HEK293 (cell line): ENCODE measurements at regions of chr15 and their contacts with region 1.

Region 1: GRCh38 chr15:75023181-75023871 is at the start of gene PPCDC:
- H3K4me3 ChIP-seq: peak within 1 kb of the TSS; percentile 66
- H3K27ac ChIP-seq: peak within 1 kb of the TSS; percentile 93
- H3K4me1 ChIP-seq: 0 out of 2 replicates have a peak, but pooled peaks cover 2% of the 10 kb centered on the region
- CTCF ChIP-seq: peak; percentile 32; the same call in 1 of the 2 replicates

Region 2: DNA sequence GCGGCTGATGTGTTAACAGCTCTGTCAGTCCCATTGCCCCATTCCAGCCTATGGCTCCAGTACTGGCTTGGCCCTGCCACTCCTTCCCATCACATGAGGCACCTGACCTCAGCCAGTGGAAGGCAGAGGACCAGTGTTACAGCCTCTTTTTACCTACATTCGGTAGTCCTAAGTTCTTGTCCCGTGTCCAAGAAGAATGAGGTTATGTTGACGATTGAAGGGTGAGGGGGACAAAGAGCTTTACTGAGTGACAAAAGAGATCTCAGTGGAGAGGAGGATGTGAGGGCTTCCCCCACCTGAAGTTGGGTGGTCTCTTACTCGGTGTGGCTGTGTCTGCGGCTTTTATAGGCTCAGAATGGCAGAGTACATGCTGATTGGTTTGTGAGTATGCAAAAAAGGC is 140.8 kb before region 1 on chr15:
- CTCF ChIA-PET with region 1: no interaction called
- POLR2A ChIA-PET with region 1: no interaction called
- H3K4me3 ChIP-seq: no peak overlapping the region
- H3K27ac ChIP-seq: no peak overlapping the region
- H3K4me1 ChIP-seq: no peaks in the 10 kb centered on the region
- CTCF ChIP-seq: no peak

Region 3: DNA sequence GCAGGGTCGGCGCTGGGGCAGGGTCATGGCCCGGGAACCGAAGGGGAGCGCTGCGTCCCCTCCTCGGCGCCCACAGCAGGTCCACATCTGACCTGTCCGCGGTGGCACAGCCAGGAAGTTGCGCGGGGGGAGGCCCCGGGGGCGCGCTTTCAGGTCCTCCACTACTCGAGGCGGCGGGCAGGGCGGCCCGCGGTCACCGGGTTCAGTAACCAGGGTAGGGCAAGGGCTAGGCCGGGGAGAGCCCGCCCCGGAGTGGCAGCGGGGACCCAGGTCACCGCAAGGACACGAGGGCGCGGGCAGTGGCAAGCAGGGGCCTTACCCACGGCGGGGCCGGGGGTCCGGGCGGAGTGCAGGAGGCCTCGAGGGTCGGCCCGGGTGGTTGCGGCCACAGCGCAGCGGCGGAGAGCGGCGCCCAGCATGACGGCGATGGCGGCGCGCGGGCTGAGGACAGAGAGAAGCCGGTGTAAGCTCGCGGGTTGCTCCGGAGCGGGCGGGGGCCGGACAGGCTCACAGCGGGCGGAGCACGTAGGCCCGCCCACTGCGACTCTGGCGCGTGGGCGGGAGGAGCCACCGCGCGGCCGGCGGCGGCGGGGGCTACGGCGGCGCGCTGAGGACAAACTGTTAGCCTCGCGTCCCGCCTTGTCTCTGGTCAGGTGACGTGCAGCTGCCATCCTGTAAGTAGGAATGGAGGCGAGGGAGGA is 85.6 kb before region 1 on chr15 and contains the start of gene COX5A:
- CTCF ChIA-PET with region 1: no interaction called
- POLR2A ChIA-PET with region 1: interaction called, 12 read pairs
- H3K4me3 ChIP-seq: peak within 1 kb of the TSS; percentile 87
- H3K27ac ChIP-seq: peak within 1 kb of the TSS; percentile 94
- H3K4me1 ChIP-seq: peaks cover 7% of the 10 kb centered on the region
- CTCF ChIP-seq: peak; percentile 87

Region 4: GRCh38 chr15:74956648-74957300 is 66.6 kb before region 1 on chr15 and contains the start of gene RPP25:
- CTCF ChIA-PET with region 1: interaction called, 3 read pairs
- POLR2A ChIA-PET with region 1: interaction called, 11 read pairs
- H3K4me3 ChIP-seq: peak within 1 kb of the TSS; percentile 46
- H3K27ac ChIP-seq: peak within 1 kb of the TSS; percentile 67
- H3K4me1 ChIP-seq: peaks cover 4% of the 10 kb centered on the region; the same call in 1 of the 2 replicates
- CTCF ChIP-seq: no peak

Region 5: DNA sequence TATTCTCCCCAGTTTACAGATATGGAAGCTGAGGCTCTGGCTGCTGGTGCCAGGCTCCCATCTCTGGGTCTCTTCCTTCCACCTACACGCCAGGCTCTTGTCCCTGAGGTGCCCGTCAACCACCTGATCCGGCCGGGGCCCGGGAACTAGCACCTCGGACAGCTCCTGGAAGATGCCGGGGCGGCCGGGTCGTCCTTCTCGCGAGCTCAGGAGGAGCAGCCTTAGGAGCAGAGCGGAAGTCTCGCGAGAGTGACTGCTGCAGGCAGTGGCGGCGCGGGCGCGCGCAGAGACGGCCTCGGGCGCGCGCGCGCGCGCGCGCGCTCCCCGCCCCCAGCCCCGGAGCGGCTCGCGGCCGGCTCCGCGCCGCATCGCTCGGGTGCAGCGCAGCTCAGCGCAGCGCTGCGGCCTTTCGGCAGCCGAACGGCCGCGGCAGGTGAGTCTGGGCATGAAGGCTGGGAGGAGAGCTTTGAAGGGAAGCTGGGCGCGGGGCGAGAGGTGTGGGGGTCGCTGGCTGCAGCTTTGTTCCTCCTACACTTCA is 28.0 kb before region 1 on chr15 and contains the start of gene SCAMP5:
- CTCF ChIA-PET with region 1: no interaction called
- POLR2A ChIA-PET with region 1: interaction called, 22 read pairs
- H3K4me3 ChIP-seq: peak within 1 kb of the TSS; percentile 69
- H3K27ac ChIP-seq: no peak within 1 kb of the TSS
- H3K4me1 ChIP-seq: no peaks in the 10 kb centered on the region; the same call in 1 of the 2 replicates
- CTCF ChIP-seq: no peak

Region 6: DNA sequence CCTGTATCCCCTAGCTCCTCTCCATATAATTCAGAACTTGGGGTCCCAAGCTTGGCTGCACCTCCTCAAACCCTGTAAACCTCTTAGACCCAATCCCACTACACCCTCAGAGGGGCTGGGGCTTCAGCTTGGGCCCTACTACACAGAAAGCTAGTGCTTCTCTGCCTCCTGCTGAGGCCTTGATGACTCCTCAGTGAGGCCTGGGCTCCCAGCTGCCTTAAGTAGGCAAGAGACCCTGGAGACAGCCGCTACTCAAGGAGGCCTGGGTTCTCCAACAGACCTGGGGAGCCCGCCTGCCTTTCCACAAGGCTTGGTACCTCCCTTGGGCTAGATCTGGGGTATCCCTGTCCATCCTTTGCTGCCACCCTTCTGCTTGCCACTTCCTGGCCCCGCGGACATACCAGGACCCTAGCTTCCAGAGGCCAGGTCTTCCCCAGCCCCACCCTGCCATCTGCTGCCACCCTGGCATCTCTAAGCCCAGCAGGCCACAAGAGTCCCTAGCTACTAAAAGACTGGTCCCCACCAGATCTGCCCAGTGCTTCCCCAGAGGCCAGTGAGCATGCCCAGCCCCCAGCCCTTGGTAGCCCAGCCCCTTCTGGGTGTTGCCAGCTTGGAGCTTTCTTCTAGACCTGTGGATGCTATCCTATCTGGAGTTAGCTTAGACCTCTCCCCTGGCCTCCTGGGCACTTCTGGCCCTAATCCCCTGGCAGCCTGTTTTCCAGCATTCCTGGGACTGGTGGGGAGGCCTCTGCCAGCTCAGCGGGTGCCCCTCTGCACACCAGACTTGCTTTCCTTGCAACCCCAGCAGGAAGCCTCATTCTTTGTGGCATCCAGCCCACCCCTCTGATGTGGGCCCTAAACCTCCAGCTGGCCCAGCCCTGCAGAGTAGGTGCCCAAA is 192.0 kb after region 1 on chr15:
- CTCF ChIA-PET with region 1: interaction called, 27 read pairs
- POLR2A ChIA-PET with region 1: interaction called, 11 read pairs
- H3K4me3 ChIP-seq: no peak overlapping the region
- H3K27ac ChIP-seq: no peak overlapping the region
- H3K4me1 ChIP-seq: no peaks in the 10 kb centered on the region
- CTCF ChIP-seq: no peak